ENCODE measurements at regions of chr17 and their contacts with region 1.

Region 1: DNA sequence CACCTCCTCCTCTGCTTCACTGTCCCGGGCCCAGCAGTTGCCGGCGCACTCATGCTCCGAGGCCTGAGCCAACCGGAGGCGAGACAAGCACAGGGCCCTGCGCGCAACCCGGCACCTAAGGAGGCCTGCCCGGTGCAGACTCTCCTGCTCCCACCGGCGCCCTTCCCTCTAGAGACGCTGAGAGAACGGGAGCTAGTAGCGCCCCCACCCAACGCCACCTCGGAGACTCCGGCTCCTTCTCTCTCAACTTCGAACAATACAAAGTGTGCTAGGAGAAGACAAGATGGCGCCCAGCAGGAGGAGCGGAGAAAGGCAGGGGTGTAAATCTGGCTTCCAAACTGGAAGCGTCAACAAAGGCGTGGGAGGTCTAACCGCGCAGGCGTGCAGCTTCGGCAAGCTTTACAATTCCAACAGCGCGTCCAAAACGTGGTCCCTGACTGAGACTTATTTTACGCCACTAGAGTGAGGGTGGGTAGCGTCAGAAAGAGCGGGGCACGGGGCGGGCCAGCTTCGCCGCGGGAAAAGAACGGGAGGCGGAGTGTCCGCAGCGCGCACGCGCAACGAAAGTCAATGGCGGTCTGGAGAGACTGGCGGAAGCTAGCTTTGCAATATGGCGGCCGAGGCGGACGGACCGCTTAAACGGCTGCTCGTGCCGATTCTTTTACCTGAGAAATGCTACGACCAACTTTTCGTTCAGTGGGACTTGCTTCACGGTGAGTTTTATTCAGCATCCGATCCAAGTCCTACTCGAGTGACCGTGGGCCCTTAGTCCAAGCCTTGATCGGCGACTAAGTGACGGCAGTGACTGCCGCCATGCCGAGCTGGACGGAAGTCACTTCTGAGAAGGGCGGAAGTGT is at the start of gene MPDU1:
- DNase-seq: peak; percentile 89 to 97
- ATAC-seq: peak; percentile 35 to 68
- H3K4me3 ChIP-seq: peak within 1 kb of the TSS; percentile 66
- H3K27ac ChIP-seq: peak within 1 kb of the TSS; percentile 91 to 96
- H3K4me1 ChIP-seq: peaks cover 50% of the 10 kb centered on the region
- CTCF ChIP-seq: no peak
- EP300 ChIP-seq: no peak
- POLR2A ChIP-seq: peak; percentile 74
- RAD21 ChIP-seq: no peak
- polyA plus RNA-seq, gene MPDU1: 148 and 204 TPM in 2 replicates

Region 2: GRCh38 chr17:7538891-7539290 is 44.6 kb before region 1 on chr17:
- CTCF ChIA-PET with region 1: no interaction called
- POLR2A ChIA-PET with region 1: no interaction called
- DNase-seq: no peak
- ATAC-seq: no peak
- H3K4me3 ChIP-seq: no peak overlapping the region
- H3K27ac ChIP-seq: no peak overlapping the region
- H3K4me1 ChIP-seq: no peaks in the 10 kb centered on the region
- CTCF ChIP-seq: no peak
- EP300 ChIP-seq: no peak
- POLR2A ChIP-seq: no peak
- RAD21 ChIP-seq: no peak

Region 3: DNA sequence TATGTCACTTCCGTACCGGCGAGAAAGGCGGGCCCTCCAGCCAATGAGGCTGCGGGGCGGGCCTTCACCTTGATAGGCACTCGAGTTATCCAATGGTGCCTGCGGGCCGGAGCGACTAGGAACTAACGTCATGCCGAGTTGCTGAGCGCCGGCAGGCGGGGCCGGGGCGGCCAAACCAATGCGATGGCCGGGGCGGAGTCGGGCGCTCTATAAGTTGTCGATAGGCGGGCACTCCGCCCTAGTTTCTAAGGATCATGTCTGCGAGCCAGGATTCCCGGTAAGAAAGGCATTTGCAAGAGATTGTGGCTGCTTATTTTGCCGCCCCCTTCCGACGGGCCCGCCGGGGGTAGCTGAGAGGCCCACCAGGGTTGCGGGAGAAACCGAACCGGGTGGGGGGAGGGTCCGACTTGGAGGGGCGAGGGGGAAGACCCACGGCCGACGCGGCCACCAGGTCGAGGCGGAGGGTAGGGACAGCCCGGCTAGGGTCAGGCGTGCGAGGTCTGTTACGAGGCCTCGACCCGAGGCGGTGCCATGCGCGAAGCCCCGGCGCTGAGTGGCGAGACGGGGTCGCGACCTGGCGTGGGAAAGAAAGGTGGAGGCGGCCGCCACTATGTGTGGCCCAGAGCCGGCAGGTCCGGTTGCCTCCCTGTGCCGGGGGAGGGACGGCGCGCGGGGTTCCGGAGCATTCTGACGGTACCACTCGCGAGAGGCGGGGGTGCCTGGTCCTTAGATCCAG is 10.7 kb before region 1 on chr17:
- CTCF ChIA-PET with region 1: interaction called, 38 read pairs
- POLR2A ChIA-PET with region 1: interaction called, 34 read pairs
- DNase-seq: peak; percentile 100
- ATAC-seq: peak in 1 of 2 experiments; percentile 1; a peak in 5 of 6 replicates
- H3K4me3 ChIP-seq: peak overlapping the region; percentile 96
- H3K27ac ChIP-seq: peak overlapping the region; percentile 96 to 97
- H3K4me1 ChIP-seq: peaks cover 40% of the 10 kb centered on the region
- CTCF ChIP-seq: no peak
- EP300 ChIP-seq: no peak; a peak in 1 of 5 replicates
- POLR2A ChIP-seq: peak; percentile 98
- RAD21 ChIP-seq: no peak; a peak in 1 of 5 replicates

Region 4: GRCh38 chr17:7614422-7615264 is 31.2 kb after region 1 on chr17 and contains the start of gene FXR2:
- CTCF ChIA-PET with region 1: interaction called, 46 read pairs
- POLR2A ChIA-PET with region 1: interaction called, 15 read pairs
- DNase-seq: peak; percentile 99 to 100
- ATAC-seq: peak; percentile 91 to 96
- H3K4me3 ChIP-seq: peak within 1 kb of the TSS; percentile 84
- H3K27ac ChIP-seq: peak within 1 kb of the TSS; percentile 92 to 95
- H3K4me1 ChIP-seq: peaks cover 29% of the 10 kb centered on the region
- CTCF ChIP-seq: peak; percentile 58
- EP300 ChIP-seq: no peak
- POLR2A ChIP-seq: peak; percentile 77
- RAD21 ChIP-seq: 0 out of 5 replicates have a peak, but pooled peaks have one; percentile 10 to 29
- polyA plus RNA-seq, gene FXR2: 40.7 and 45.3 TPM in 2 replicates

Region 5: GRCh38 chr17:7627250-7628121 is 44.0 kb after region 1 on chr17 and contains the start of gene SAT2:
- CTCF ChIA-PET with region 1: interaction called, 18 read pairs
- POLR2A ChIA-PET with region 1: interaction called, 10 read pairs
- DNase-seq: peak; percentile 94 to 99
- ATAC-seq: peak; percentile 91 to 94
- H3K4me3 ChIP-seq: peak within 1 kb of the TSS; percentile 85
- H3K27ac ChIP-seq: peak within 1 kb of the TSS; percentile 93 to 94
- H3K4me1 ChIP-seq: peaks cover 10% of the 10 kb centered on the region; the same call in 2 of the 3 replicates
- CTCF ChIP-seq: no peak
- EP300 ChIP-seq: no peak
- POLR2A ChIP-seq: peak; percentile 77
- RAD21 ChIP-seq: 0 out of 5 replicates have a peak, but pooled peaks of 1 of the 2 experiments have one; percentile 17
- polyA plus RNA-seq, gene SAT2: 38.1 and 44.4 TPM in 2 replicates

Region 6: GRCh38 chr17:7803981-7804380 is 220.5 kb after region 1 on chr17:
- CTCF ChIA-PET with region 1: no interaction called
- POLR2A ChIA-PET with region 1: no interaction called
- DNase-seq: no peak
- ATAC-seq: no peak
- H3K4me3 ChIP-seq: no peak overlapping the region
- H3K27ac ChIP-seq: no peak overlapping the region
- H3K4me1 ChIP-seq: peaks cover 1% of the 10 kb centered on the region
- CTCF ChIP-seq: no peak
- EP300 ChIP-seq: no peak
- POLR2A ChIP-seq: no peak
- RAD21 ChIP-seq: no peak

Measured in A549 (cell line).